ENCODE measurements at regions of chr11 and their contacts with region 1.

Region 1: GRCh38 chr11:75022759-75023396 is 34.1 kb downstream of the NEU3 start:
- DNase-seq: peak; percentile 83
- CTCF ChIP-seq: peak; percentile 97

Region 2: GRCh38 chr11:74388678-74389327 is 634.1 kb before region 1 on chr11:
- CTCF ChIA-PET with region 1: no interaction called
- POLR2A ChIA-PET with region 1: no interaction called
- DNase-seq: peak; percentile 50
- CTCF ChIP-seq: peak; percentile 80

Region 3: DNA sequence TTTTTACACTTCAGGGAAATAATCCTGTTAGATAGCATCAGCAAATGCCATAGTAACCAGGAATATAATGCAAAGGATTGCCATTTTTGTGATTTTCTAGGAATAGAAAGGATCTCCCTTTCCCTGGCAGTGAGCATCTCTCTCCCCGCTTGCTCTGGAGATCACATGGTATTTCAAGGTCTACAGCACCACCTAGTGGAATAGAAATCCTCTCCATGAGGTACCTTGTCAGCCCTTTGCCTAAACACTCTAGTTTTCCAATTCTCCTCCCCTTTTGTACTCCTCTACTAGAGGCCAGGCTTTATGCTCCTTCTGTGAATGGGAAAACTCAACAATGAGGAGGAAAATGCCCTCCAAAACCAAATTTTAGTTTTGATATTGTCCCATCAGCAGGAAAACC is 152.4 kb before region 1 on chr11:
- CTCF ChIA-PET with region 1: no interaction called
- POLR2A ChIA-PET with region 1: no interaction called
- DNase-seq: no peak
- CTCF ChIP-seq: peak; percentile 29

Region 4: GRCh38 chr11:74929431-74930363 is 93.2 kb before region 1 on chr11:
- CTCF ChIA-PET with region 1: interaction called, 61 read pairs
- POLR2A ChIA-PET with region 1: no interaction called
- DNase-seq: peak; percentile 54
- CTCF ChIP-seq: peak; percentile 90

Region 5: DNA sequence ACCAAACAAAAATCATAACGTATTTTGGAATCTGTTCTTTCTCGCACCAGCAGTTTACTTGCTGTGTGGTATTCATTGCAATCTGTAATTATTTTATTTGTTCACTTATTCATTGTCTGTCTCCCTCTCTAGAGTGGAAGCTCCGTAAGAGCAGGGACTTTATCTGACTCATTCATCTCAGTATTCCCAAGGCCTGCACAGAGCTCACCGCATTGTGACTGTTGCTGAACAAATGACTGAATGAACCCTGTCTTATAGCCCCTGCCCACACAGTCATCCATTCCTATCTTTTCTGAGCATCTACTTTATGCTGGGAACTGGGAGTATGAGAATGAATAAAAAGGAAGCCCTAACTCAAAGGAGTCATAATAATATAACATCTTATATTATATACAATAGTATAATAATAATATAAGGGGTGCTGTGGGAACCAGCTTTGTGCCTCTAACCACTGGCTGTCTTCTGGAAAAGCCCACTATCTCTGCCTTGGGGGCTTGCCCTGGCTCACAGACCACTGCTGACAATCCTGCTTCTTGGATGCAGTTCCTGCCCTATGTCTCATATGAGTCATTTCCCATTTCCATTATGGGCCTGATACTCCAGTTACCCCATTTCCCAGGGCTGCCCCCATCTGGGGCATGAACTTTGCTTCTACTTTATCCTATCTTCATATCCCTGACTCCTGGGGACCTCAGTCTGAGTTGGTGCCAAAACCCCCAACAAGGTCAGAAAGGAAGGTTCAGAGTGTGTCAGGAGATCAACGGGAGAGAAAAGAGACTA is 85.0 kb before region 1 on chr11:
- CTCF ChIA-PET with region 1: interaction called, 61 read pairs
- POLR2A ChIA-PET with region 1: no interaction called
- DNase-seq: no peak
- CTCF ChIP-seq: no peak

Region 6: DNA sequence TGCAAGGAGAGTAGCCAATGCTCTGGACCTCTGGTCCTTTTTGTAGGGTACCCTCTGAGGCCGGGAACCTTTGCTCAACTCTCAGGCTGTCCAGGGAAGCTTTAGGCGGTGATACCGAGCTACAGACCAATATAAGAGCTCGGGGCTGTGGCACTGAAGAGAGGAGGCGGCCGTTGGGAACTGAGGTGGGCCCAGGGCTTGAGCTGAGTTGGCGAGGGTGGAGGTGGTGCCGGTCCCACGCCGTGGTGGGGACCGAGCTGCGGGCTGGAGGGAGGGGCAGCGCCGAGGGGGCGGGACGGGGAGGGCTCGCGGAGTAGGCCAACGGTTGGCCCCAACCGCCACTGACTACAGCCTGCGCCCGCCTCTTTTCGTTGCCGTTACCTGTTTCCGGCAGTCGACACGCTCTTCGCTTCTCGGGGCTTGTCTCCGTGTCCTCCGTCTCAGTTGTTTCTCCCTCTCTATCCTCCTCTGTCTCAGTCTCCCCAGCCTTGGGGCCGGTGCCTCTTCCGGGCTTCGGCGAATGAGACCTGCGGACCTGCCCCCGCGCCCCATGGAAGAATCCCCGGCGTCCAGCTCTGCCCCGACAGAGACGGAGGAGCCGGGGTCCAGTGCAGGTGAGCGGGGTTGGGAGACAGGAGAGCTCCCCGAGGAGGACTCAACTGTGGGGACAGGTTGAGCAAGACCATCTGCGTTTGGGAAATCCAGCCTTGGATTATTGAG is 34.2 kb before region 1 on chr11 and contains the start of gene NEU3:
- CTCF ChIA-PET with region 1: interaction called, 12 read pairs
- POLR2A ChIA-PET with region 1: no interaction called
- DNase-seq: peak; percentile 91
- CTCF ChIP-seq: no peak

Region 7: GRCh38 chr11:75004215-75004614 is 18.7 kb before region 1 on chr11:
- CTCF ChIA-PET with region 1: interaction called, 96 read pairs
- POLR2A ChIA-PET with region 1: no interaction called
- DNase-seq: no peak
- CTCF ChIP-seq: no peak

Region 8: DNA sequence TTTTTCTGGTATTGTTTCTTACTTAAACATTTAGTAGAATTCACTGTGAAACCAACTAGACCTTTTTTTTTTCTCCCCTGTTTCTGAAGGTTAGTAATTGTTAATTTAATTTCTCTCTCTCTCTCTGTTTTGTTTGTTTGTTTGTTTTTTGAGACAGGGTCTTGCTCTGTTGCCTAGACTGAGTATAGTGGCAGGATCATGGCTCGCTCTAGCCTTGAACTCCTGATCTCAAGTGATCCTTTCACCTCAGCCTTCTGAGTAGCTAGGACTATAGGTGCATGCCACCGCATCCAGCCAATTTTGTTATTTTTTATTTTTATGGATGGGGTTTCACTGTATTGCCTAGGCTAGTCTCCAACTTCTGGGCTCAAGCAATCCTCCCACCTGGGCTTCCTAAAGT is 957.2 kb after region 1 on chr11:
- CTCF ChIA-PET with region 1: no interaction called
- POLR2A ChIA-PET with region 1: no interaction called
- DNase-seq: no peak
- CTCF ChIP-seq: no peak

Measured in GM10248 (cell line).